Right ventricle myocardium inferior (tissue), 1 donor: ENCODE measurements at regions of chr5 and their contacts with region 1.

Region 1: DNA sequence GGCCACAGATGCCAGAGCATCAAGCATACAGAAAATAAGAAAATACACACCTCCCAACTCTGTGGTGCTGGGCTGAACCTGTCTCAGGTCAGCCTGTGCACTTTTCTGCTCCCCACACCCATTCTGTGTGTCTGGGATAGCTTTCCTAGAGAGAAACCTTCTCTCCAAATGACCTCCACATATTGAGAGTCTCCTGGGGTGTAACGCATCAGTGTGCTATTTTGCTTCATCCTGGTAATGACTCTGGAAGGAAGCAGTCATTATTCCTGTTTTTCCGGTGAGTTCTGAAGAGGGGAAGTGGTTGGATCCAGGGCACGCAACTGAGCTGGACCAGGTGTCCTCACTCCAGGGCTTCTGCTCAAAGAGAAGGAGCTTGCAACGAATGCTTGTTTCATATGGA is 73.2 kb upstream of the SH3PXD2B start:
- DNase-seq: no peak
- ATAC-seq: no peak

Region 2: DNA sequence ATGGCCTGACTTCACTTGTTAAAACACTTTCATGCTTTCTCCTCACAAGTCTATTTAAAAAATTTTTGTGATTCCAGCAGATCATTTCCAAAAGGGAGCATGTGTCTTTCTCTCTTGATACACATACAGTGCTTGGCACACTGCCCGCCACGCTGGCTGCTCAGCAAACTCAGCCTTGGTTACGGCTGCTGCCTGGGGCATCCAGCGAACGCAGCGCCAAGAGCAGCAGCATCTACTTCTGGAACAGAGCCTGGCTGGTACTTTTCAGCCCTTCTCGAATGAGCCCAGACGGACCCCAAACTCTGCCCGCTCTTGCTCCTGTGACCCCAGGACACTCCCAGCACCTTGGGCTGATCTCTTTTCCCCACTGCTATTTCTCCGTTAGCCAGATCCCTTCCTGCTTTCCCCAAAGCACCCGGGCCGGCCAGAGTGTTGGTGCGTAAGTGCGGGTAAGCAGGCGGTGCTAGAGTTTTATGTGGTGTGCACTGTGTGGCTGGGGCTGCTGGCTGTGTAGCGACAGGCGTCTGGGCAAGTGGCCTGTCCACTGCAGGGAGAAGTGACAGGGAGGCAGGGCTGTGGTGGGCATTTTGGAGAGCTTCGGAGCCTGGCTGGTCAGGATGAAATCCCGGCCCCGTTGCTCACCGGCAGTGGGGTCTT is 146.4 kb before region 1 on chr5:
- intact Hi-C with region 1: no loop called
- DNase-seq: peak; percentile 91
- ATAC-seq: no peak

Region 3: GRCh38 chr5:172509405-172509781 is 18.2 kb before region 1 on chr5:
- intact Hi-C with region 1: loop called (anchors 2 kb)
- DNase-seq: no peak
- ATAC-seq: no peak

Region 4: GRCh38 chr5:172594867-172595466 is 67.4 kb after region 1 on chr5:
- intact Hi-C with region 1: no loop called
- DNase-seq: no peak
- ATAC-seq: no peak